Dendritic cell treated with granulocyte-macrophage colony-stimulating factor and Interleukin-4, amounts not matched to agents 40 ng/mL and 50 ng/mL, for 4 days (primary cell): ENCODE measurements at regions of chr11 and their contacts with region 1.

Region 1: GRCh38 chr11:13772223-13773046 is 104.0 kb downstream of the FAR1 start:
- H3K4me3 Mint-ChIP-seq: no peak overlapping the region
- H3K27ac Mint-ChIP-seq: no peak overlapping the region
- H3K4me1 Mint-ChIP-seq: no peaks in the 10 kb centered on the region
- H3K27me3 Mint-ChIP-seq: peaks cover 10% of the 10 kb centered on the region

Region 2: DNA sequence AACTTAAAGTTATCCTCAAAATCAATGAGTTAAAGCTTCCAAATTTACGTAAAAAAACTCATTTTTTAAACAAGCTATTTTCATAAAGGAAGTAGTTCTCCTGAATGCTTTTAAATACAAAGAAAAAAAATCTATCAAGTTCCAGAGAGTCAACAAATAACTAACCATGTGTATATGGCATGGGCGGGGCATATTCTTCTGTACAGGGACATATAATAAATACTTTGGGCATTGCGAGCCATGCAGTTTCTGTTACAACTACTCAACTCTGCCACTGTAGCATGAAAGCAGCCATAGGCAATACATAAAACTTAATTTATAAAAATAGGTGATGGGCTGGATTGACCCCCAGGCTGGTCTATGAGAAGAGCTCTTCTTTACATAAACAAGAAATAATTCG is 367.2 kb before region 1 on chr11:
- intact Hi-C with region 1: no loop called
- H3K4me3 Mint-ChIP-seq: no peak overlapping the region
- H3K27ac Mint-ChIP-seq: no peak overlapping the region
- H3K4me1 Mint-ChIP-seq: no peaks in the 10 kb centered on the region
- H3K27me3 Mint-ChIP-seq: no peaks in the 10 kb centered on the region

Region 3: DNA sequence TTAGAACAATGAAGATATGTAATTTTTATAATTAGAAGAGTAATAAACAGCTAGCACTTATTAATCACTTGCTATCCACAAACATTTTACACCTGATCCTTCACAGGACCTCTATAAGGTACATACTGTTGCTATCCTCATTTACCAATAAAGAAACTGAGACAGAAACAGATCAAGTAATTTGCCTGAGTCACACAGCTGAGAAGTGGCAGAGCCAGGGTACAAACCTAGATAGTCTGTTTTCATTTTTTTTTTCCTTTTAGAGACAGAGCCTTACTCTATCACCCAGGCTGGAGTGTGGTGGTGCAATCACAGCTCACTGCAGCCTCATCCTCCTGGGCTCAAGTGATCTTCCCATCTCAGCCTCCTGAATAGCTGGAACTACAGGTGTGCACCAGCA is 204.9 kb before region 1 on chr11:
- intact Hi-C with region 1: no loop called
- H3K4me3 Mint-ChIP-seq: no peak overlapping the region
- H3K27ac Mint-ChIP-seq: no peak overlapping the region
- H3K4me1 Mint-ChIP-seq: no peaks in the 10 kb centered on the region
- H3K27me3 Mint-ChIP-seq: no peaks in the 10 kb centered on the region

Region 4: DNA sequence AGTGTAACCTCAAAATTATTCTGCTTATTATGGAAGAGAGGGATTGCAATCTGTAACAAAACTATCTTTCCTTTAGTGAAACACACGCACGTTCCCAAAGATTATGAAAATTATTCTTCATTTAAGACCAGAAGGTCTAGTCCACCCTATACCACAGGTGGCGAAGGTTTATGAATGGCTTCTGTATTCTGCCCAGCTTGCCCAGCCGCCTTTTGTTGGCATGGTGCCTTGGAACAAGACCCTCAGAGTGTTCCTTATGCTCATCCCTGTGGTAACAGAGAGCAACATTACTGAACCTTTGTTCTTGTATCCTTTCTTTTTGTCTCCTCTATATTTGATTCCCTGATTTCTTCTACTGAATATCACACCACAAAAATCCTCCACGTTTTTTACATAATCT is 12.4 kb after region 1 on chr11:
- intact Hi-C with region 1: no loop called
- H3K4me3 Mint-ChIP-seq: no peak overlapping the region
- H3K27ac Mint-ChIP-seq: no peak overlapping the region
- H3K4me1 Mint-ChIP-seq: no peaks in the 10 kb centered on the region
- H3K27me3 Mint-ChIP-seq: peaks cover 1% of the 10 kb centered on the region

Region 5: GRCh38 chr11:13831696-13832095 is 59.3 kb after region 1 on chr11:
- intact Hi-C with region 1: no loop called
- H3K4me3 Mint-ChIP-seq: no peak overlapping the region
- H3K27ac Mint-ChIP-seq: no peak overlapping the region
- H3K4me1 Mint-ChIP-seq: no peaks in the 10 kb centered on the region
- H3K27me3 Mint-ChIP-seq: no peaks in the 10 kb centered on the region

Region 6: GRCh38 chr11:13955971-13956421 is 183.6 kb after region 1 on chr11:
- intact Hi-C with region 1: loop called (anchors 5 kb)
- H3K4me3 Mint-ChIP-seq: no peak overlapping the region
- H3K27ac Mint-ChIP-seq: no peak overlapping the region
- H3K4me1 Mint-ChIP-seq: no peaks in the 10 kb centered on the region
- H3K27me3 Mint-ChIP-seq: peaks cover 23% of the 10 kb centered on the region

Region 7: DNA sequence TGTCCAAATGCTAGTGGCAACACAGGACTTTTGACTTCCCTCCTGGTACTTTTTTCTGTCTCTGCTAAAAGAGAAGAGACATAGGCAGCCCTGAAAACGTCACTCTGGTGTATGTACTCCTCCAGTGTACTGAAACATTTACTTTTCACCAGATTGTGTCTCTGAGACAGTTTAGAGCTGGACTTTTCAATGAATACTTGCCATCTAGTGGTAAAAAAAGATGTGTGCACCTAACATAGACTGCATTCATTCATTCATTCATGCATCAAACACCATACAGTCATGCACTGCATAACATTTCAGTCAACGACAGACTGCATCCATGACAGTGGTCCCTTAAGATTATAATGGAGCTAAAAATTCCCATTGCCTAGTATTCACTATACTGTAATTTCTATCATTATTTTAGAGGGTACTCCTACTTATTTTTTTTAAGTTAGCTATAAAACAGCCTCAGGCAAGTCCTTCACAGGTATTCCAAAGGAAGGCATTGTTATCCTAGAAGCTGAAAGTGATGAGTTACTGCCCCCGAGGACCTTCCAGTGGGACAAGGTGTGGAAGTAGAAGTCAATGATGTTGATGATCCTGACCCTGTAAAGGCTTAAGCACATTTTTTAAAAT is 376.3 kb after region 1 on chr11:
- intact Hi-C with region 1: loop called (anchors 5 kb)
- H3K4me3 Mint-ChIP-seq: no peak overlapping the region
- H3K27ac Mint-ChIP-seq: no peak overlapping the region
- H3K4me1 Mint-ChIP-seq: no peaks in the 10 kb centered on the region
- H3K27me3 Mint-ChIP-seq: no peaks in the 10 kb centered on the region

Region 8: GRCh38 chr11:14249121-14249963 is 476.9 kb after region 1 on chr11:
- intact Hi-C with region 1: loop called (anchors 1 kb)
- H3K4me3 Mint-ChIP-seq: no peak overlapping the region
- H3K27ac Mint-ChIP-seq: no peak overlapping the region
- H3K4me1 Mint-ChIP-seq: no peaks in the 10 kb centered on the region
- H3K27me3 Mint-ChIP-seq: peaks cover 31% of the 10 kb centered on the region

Region 9: GRCh38 chr11:14454861-14455632 is 682.6 kb after region 1 on chr11:
- intact Hi-C with region 1: loop called (anchors 10 kb)
- H3K4me3 Mint-ChIP-seq: no peak overlapping the region
- H3K27ac Mint-ChIP-seq: no peak overlapping the region
- H3K4me1 Mint-ChIP-seq: no peaks in the 10 kb centered on the region
- H3K27me3 Mint-ChIP-seq: no peaks in the 10 kb centered on the region